Activated B cell treated with CpG ODN at 0.5 μM for 24 hours (primary cell): ENCODE measurements at regions of chr9 and their contacts with region 1.

Region 1: GRCh38 chr9:36961561-36962298 is 72.3 kb downstream of the PAX5 start:
- DNase-seq: no peak
- ATAC-seq: no peak
- H3K4me3 Mint-ChIP-seq: no peak overlapping the region
- H3K27ac Mint-ChIP-seq: peak overlapping the region; percentile 65
- H3K4me1 Mint-ChIP-seq: peaks cover 44% of the 10 kb centered on the region
- H3K27me3 Mint-ChIP-seq: no peaks in the 10 kb centered on the region
- CTCF ChIP-seq: no peak

Region 2: GRCh38 chr9:36949466-36949865 is 12.3 kb before region 1 on chr9:
- CTCF ChIA-PET with region 1: no interaction called
- POLR2A ChIA-PET with region 1: interaction called, 10 read pairs
- intact Hi-C with region 1: no loop called
- DNase-seq: peak; percentile 15
- ATAC-seq: peak; percentile 87
- H3K4me3 Mint-ChIP-seq: peak overlapping the region; percentile 61
- H3K27ac Mint-ChIP-seq: peak overlapping the region; percentile 88
- H3K4me1 Mint-ChIP-seq: peaks cover 81% of the 10 kb centered on the region
- H3K27me3 Mint-ChIP-seq: no peaks in the 10 kb centered on the region
- CTCF ChIP-seq: no peak

Region 3: GRCh38 chr9:37053684-37054362 is 92.1 kb after region 1 on chr9:
- CTCF ChIA-PET with region 1: no interaction called
- POLR2A ChIA-PET with region 1: no interaction called
- intact Hi-C with region 1: no loop called
- DNase-seq: no peak
- ATAC-seq: no peak
- H3K4me3 Mint-ChIP-seq: no peak overlapping the region
- H3K27ac Mint-ChIP-seq: no peak overlapping the region
- H3K4me1 Mint-ChIP-seq: peaks cover 19% of the 10 kb centered on the region
- H3K27me3 Mint-ChIP-seq: no peaks in the 10 kb centered on the region
- CTCF ChIP-seq: no peak

Region 4: DNA sequence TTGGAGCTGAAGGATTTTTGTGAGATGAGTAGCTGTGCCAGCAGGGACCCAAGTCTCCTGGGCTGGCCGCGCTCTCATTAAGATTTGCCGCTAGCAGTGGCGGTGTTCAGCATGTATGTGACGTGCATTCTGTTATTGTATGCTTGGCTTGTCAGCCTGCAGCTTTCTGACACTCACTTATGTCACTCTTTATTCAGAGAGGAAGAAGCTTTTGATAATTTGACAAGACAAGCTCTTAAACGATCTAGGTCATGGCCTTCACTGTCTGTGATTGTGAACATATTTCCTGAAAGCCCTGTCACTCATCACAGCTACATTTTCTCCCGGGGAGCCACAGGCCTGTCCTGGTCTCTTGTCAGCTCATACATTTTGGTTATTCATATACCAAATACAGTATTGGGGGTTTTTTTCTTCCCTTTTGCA is 362.5 kb after region 1 on chr9:
- CTCF ChIA-PET with region 1: no interaction called
- POLR2A ChIA-PET with region 1: interaction called, 11 read pairs
- intact Hi-C with region 1: no loop called
- DNase-seq: peak; percentile 42
- ATAC-seq: peak; percentile 86
- H3K4me3 Mint-ChIP-seq: peak overlapping the region; percentile 59
- H3K27ac Mint-ChIP-seq: peak overlapping the region; percentile 99
- H3K4me1 Mint-ChIP-seq: peaks cover 69% of the 10 kb centered on the region
- H3K27me3 Mint-ChIP-seq: no peaks in the 10 kb centered on the region
- CTCF ChIP-seq: no peak